GM12878 (cell line): ENCODE measurements at regions of chr1 and their contacts with region 1.

Region 1: GRCh38 chr1:103461161-103462105 is 64.1 kb upstream of the RNPC3 start:
- DNase-seq: no peak
- ATAC-seq: peak; percentile 55
- H3K4me3 ChIP-seq: no peak overlapping the region
- H3K27ac ChIP-seq: no peak overlapping the region
- H3K4me1 ChIP-seq: no peaks in the 10 kb centered on the region
- H3K27me3 ChIP-seq: no peaks in the 10 kb centered on the region
- CTCF ChIP-seq: peak; percentile 33 to 64 (median 44); a peak in 5 of 6 replicates
- EP300 ChIP-seq: no peak
- POLR2A ChIP-seq: no peak
- RAD21 ChIP-seq: peak; percentile 74

Region 2: DNA sequence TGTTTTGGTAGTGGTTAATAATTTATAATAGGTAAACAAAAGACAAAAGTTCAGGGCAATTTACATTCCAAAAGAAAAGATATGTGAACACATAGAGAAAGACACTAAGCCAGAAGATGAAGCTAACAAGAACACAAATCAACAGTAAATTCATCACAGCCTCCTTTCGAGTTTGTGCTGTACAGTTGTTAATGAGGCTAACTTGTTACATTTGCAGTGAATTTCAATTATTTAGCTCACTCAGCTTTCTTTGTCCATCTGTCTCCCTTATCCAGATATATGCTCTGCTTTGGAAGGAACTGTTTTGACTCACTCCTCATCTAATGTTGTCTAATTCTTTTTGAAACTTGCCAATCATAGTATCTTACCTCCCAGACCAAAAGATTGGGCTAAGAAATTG is 1041.4 kb before region 1 on chr1:
- CTCF ChIA-PET with region 1: no interaction called
- POLR2A ChIA-PET with region 1: no interaction called
- RAD21 ChIA-PET with region 1: no interaction called
- SMC1A ChIA-PET with region 1: no interaction called
- in situ Hi-C with region 1: no loop called
- intact Hi-C with region 1: no loop called
- DNase-seq: no peak
- ATAC-seq: no peak
- H3K4me3 ChIP-seq: no peak overlapping the region
- H3K27ac ChIP-seq: no peak overlapping the region
- H3K4me1 ChIP-seq: no peaks in the 10 kb centered on the region
- H3K27me3 ChIP-seq: no peaks in the 10 kb centered on the region
- CTCF ChIP-seq: no peak
- EP300 ChIP-seq: no peak
- POLR2A ChIP-seq: no peak
- RAD21 ChIP-seq: no peak

Region 3: DNA sequence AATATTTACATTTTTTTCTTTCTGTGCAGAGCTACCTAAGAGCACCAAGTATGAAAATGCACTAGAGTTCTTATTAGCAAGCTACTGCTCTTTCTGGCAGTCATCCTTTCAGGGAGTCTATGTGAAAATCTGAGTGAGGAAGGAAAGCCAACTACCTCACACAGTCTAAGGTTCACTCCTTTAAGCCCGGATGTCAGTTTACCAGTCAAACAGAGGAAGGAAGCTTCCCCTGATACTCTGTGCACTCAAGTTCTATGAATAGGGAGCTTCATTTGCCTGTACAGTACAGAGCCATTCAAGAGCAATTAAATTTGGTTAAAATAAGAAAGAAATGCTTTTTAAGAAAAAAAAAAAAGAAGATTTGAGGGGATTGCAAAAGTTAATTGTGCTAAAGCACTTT is 360.0 kb before region 1 on chr1:
- CTCF ChIA-PET with region 1: interaction called, 82 read pairs
- POLR2A ChIA-PET with region 1: no interaction called
- RAD21 ChIA-PET with region 1: interaction called, 32 read pairs
- SMC1A ChIA-PET with region 1: interaction called, 29 read pairs
- in situ Hi-C with region 1: no loop called
- intact Hi-C with region 1: loop called (anchors 2 kb)
- DNase-seq: no peak
- ATAC-seq: no peak; the same call in 2 of the 3 replicates
- H3K4me3 ChIP-seq: no peak overlapping the region
- H3K27ac ChIP-seq: no peak overlapping the region
- H3K4me1 ChIP-seq: no peaks in the 10 kb centered on the region
- H3K27me3 ChIP-seq: no peaks in the 10 kb centered on the region
- CTCF ChIP-seq: no peak
- EP300 ChIP-seq: no peak
- POLR2A ChIP-seq: no peak
- RAD21 ChIP-seq: no peak

Region 4: DNA sequence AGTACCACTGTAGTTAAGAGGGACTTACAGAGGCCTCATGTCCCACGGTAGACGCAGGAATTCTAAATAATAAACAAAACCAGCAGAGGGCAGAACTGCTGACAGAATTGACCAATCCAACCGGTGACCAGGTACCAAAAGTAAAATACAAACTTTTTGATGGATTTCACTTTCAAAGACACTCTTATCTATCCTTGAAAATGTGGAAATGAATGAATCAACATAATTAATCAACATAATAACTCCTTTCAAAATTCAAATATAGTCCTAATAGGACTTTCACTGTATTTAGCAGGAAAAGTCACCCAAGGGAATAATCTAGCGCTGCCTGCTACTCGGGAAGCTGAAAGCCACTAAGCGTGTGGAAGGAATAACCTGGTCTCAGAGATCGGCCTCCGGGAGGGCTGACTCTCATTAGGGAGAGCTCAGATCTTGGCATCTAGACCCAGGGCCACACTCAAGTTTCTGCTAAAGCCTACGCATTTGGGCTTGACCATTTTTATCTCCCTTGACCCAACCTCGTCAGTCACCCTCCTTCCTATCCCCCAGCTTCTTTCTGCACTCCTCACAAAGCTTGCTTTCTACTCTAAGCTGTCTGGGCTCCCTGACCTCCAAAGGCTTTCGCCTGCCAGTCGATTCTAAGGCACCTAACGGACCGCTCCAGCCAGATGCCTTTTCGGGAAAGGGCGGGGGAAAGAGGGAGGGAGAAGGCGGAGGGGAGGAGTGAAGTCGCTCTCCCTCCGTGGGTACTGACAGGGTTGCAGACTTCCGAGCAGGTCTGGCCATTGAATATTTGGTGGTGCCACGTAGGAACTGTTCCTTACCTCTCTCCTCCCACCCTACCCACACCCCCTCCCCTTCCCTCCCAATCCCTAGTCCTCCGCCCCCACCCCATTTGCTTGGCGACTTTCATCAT is 354.7 kb before region 1 on chr1:
- CTCF ChIA-PET with region 1: interaction called, 82 read pairs
- POLR2A ChIA-PET with region 1: no interaction called
- RAD21 ChIA-PET with region 1: interaction called, 32 read pairs
- SMC1A ChIA-PET with region 1: interaction called, 29 read pairs
- in situ Hi-C with region 1: no loop called
- intact Hi-C with region 1: loop called (anchors 2 kb)
- DNase-seq: no peak
- ATAC-seq: peak; percentile 87
- H3K4me3 ChIP-seq: no peak overlapping the region
- H3K27ac ChIP-seq: no peak overlapping the region
- H3K4me1 ChIP-seq: no peaks in the 10 kb centered on the region
- H3K27me3 ChIP-seq: peaks cover 0 to 9% of the 10 kb centered on the region in 2 experiments; a peak in 2 of 4 replicates
- CTCF ChIP-seq: peak; percentile 31 to 45 (median 34); a peak in 3 of 6 replicates
- EP300 ChIP-seq: no peak
- POLR2A ChIP-seq: no peak
- RAD21 ChIP-seq: peak; percentile 45

Region 5: DNA sequence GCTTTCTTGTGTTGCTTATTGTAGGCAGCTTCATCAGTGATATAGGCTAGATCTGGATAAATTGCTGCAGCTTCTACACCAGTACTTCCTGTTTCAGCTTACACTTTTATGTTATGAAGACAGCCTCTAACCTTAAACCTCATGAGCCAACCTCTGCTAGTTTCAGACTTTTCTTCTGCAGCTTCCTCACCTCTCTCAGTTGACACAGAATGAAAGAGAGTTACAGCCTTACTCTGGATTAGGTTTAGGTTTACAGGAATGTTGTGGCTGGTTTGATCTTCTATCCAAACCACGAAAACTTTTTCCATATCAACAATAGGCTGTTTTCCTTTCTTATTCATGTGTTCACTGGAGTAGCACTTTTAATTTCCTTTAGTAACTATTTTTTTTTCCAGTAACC is 12.9 kb before region 1 on chr1:
- CTCF ChIA-PET with region 1: interaction called, 15 read pairs
- POLR2A ChIA-PET with region 1: no interaction called
- RAD21 ChIA-PET with region 1: interaction called, 4 read pairs
- SMC1A ChIA-PET with region 1: interaction called, 8 read pairs
- in situ Hi-C with region 1: no loop called
- intact Hi-C with region 1: no loop called
- DNase-seq: no peak
- ATAC-seq: no peak
- H3K4me3 ChIP-seq: no peak overlapping the region
- H3K27ac ChIP-seq: no peak overlapping the region
- H3K4me1 ChIP-seq: no peaks in the 10 kb centered on the region
- H3K27me3 ChIP-seq: no peaks in the 10 kb centered on the region; a peak in 1 of 4 replicates
- CTCF ChIP-seq: no peak
- EP300 ChIP-seq: no peak
- POLR2A ChIP-seq: no peak
- RAD21 ChIP-seq: no peak

Region 6: GRCh38 chr1:103514920-103515503 is 53.6 kb after region 1 on chr1:
- CTCF ChIA-PET with region 1: interaction called, 19 read pairs
- POLR2A ChIA-PET with region 1: no interaction called
- RAD21 ChIA-PET with region 1: interaction called, 5 read pairs
- SMC1A ChIA-PET with region 1: interaction called, 13 read pairs
- in situ Hi-C with region 1: no loop called
- intact Hi-C with region 1: no loop called
- DNase-seq: peak; percentile 35
- ATAC-seq: peak; percentile 80
- H3K4me3 ChIP-seq: no peak overlapping the region
- H3K27ac ChIP-seq: no peak overlapping the region
- H3K4me1 ChIP-seq: no peaks in the 10 kb centered on the region
- H3K27me3 ChIP-seq: no peaks in the 10 kb centered on the region
- CTCF ChIP-seq: peak; percentile 62 to 87 (median 70)
- EP300 ChIP-seq: no peak
- POLR2A ChIP-seq: no peak
- RAD21 ChIP-seq: peak; percentile 99

Region 7: GRCh38 chr1:103520822-103521221 is 59.4 kb after region 1 on chr1:
- CTCF ChIA-PET with region 1: interaction called, 19 read pairs
- POLR2A ChIA-PET with region 1: no interaction called
- RAD21 ChIA-PET with region 1: interaction called, 5 read pairs
- SMC1A ChIA-PET with region 1: interaction called, 5 read pairs
- in situ Hi-C with region 1: no loop called
- intact Hi-C with region 1: no loop called
- DNase-seq: no peak
- ATAC-seq: no peak
- H3K4me3 ChIP-seq: no peak overlapping the region
- H3K27ac ChIP-seq: no peak overlapping the region
- H3K4me1 ChIP-seq: no peaks in the 10 kb centered on the region; the same call in 1 of the 2 replicates
- H3K27me3 ChIP-seq: no peaks in the 10 kb centered on the region
- CTCF ChIP-seq: no peak
- EP300 ChIP-seq: no peak
- POLR2A ChIP-seq: no peak
- RAD21 ChIP-seq: no peak

Region 8: DNA sequence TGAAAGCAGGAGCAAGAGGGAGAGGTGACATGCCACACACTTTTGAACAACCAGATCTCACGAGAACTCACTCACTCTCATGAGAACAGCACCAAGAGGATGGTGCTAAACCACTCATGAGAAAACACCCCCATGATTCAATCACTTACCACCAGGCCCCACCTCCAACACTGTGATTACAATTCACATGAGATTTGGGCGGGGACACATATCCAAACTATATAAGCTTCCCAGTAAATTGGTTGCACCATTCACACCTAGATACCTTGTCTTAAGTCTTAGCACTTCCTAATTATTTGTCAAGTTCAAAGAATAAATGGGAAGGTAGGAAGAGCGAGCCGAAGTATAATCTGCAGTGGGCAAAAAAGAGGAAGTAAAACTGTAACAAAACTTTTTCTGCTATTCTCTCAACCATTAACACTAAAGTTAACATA is 322.5 kb after region 1 on chr1:
- CTCF ChIA-PET with region 1: no interaction called
- POLR2A ChIA-PET with region 1: no interaction called
- RAD21 ChIA-PET with region 1: no interaction called
- SMC1A ChIA-PET with region 1: no interaction called
- in situ Hi-C with region 1: no loop called
- intact Hi-C with region 1: no loop called
- DNase-seq: peak; percentile 13
- ATAC-seq: peak; percentile 87
- H3K4me3 ChIP-seq: no peak overlapping the region
- H3K27ac ChIP-seq: no peak overlapping the region
- H3K4me1 ChIP-seq: no peaks in the 10 kb centered on the region
- H3K27me3 ChIP-seq: no peaks in the 10 kb centered on the region
- CTCF ChIP-seq: no peak
- EP300 ChIP-seq: no peak
- POLR2A ChIP-seq: no peak
- RAD21 ChIP-seq: no peak